Aorta (tissue), 5 donors: ENCODE measurements at regions of chr1 and their contacts with region 1.

Region 1: DNA sequence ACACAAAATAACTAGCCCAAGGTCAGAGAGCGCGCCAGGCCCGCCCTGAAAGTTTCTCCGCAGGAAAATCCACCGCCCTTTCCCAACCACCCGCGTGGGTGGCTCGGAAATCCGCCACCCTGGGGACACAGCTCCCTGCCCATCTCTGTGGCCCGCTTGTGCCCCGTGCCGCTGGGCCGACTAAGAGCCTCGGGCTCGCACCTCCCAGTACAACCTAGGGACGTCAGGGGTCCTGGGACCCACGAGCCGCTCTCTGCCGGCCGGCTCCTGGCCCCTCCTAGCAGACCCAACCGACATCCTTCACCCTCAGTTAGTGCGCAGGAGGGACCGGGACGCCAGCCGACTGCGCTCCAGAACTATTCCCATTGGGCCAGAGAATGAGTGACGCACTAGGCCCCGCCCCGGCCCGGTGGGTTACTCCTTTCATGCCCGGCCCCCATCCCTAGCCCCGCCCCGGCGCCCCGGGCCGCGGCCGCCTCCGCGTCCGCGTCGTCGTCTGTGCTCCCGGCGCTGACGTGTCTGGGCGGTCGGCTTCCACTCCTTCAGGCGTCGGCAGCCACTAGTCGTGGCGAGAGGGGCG is 395 bp upstream of the UAP1 start:
- DNase-seq: peak; percentile 99 to 100
- ATAC-seq: peak; percentile 97
- H3K4me3 ChIP-seq: peak overlapping the region; percentile 48 to 79
- H3K27ac ChIP-seq: peak overlapping the region; percentile 62 to 95
- H3K4me1 ChIP-seq: peaks cover 2 to 9% of the 10 kb centered on the region in 2 donors
- H3K27me3 ChIP-seq: no peaks in the 10 kb centered on the region

Region 2: DNA sequence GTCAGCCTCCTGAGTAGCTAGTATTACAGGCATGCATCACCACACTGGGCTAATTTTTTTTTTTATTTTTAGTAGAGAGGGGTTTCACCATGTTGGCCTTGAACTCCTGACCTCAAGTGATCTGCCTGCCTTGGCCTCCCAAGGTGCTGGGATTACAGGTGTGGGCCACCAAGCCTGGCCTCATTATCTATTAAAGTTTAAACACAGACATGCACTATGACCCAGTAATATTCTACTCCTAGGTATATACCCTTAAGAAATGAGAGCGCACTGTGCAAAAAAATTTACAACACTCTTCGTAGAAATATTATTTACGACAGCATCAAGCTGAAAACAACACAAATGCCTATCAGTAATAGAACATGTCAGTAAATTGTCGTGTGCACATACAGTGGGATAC is 130.5 kb before region 1 on chr1:
- intact Hi-C with region 1: no loop called
- DNase-seq: no peak
- ATAC-seq: no peak
- H3K4me3 ChIP-seq: no peak overlapping the region
- H3K27ac ChIP-seq: no peak overlapping the region
- H3K4me1 ChIP-seq: no peaks in the 10 kb centered on the region
- H3K27me3 ChIP-seq: no peaks in the 10 kb centered on the region

Region 3: GRCh38 chr1:162497723-162498500 is 63.2 kb before region 1 on chr1 and contains the start of gene UHMK1:
- intact Hi-C with region 1: loop called in 1 of 2 experiments (anchors 5 kb)
- DNase-seq: peak; percentile 95 to 96
- ATAC-seq: peak; percentile 98
- H3K4me3 ChIP-seq: peak within 1 kb of the TSS; percentile 55 to 78
- H3K27ac ChIP-seq: peak within 1 kb of the TSS; percentile 49 to 87
- H3K4me1 ChIP-seq: peaks cover 0 to 4% of the 10 kb centered on the region in 2 donors
- H3K27me3 ChIP-seq: no peaks in the 10 kb centered on the region
- total RNA-seq, gene UHMK1: 28.0 to 29.6 TPM

Region 4: GRCh38 chr1:162541619-162542141 is 19.4 kb before region 1 on chr1:
- intact Hi-C with region 1: loop called in 1 of 2 experiments (anchors 1 kb)
- DNase-seq: peak in 1 of 2 donors; percentile 80
- ATAC-seq: peak; percentile 61
- H3K4me3 ChIP-seq: no peak overlapping the region
- H3K27ac ChIP-seq: peak overlapping the region; percentile 49 to 65
- H3K4me1 ChIP-seq: peaks cover 0 to 3% of the 10 kb centered on the region in 2 donors
- H3K27me3 ChIP-seq: no peaks in the 10 kb centered on the region

Region 5: GRCh38 chr1:162612606-162613400 is 51.7 kb after region 1 on chr1:
- intact Hi-C with region 1: no loop called
- DNase-seq: peak in 1 of 2 donors; percentile 59
- ATAC-seq: peak; percentile 87
- H3K4me3 ChIP-seq: no peak overlapping the region
- H3K27ac ChIP-seq: peak overlapping the region in 1 of 2 donors; percentile 89
- H3K4me1 ChIP-seq: peaks cover 0 to 6% of the 10 kb centered on the region in 2 donors
- H3K27me3 ChIP-seq: no peaks in the 10 kb centered on the region